Right lobe of liver (tissue), 6 donors: ENCODE measurements at regions of chr1 and their contacts with region 1.

Region 1: GRCh38 chr1:110766025-110766647 is 91.4 kb upstream of the KCNA3 start:
- DNase-seq: no peak
- ATAC-seq: peak; percentile 61 to 82 (median 72)
- H3K4me3 ChIP-seq: no peak overlapping the region
- H3K27ac ChIP-seq: no peak overlapping the region
- H3K4me1 ChIP-seq: no peaks in the 10 kb centered on the region
- H3K27me3 ChIP-seq: peaks cover 0 to 5% of the 10 kb centered on the region in 2 donors
- CTCF ChIP-seq: peak; percentile 56 to 82 (median 76)
- POLR2A ChIP-seq: no peak

Region 2: GRCh38 chr1:110630839-110631663 is 135.1 kb before region 1 on chr1:
- intact Hi-C with region 1: loop called (anchors 5 to 10 kb)
- DNase-seq: peak; percentile 74 to 78 (median 77)
- ATAC-seq: peak; percentile 94 to 97 (median 95)
- H3K4me3 ChIP-seq: no peak overlapping the region
- H3K27ac ChIP-seq: no peak overlapping the region
- H3K4me1 ChIP-seq: no peaks in the 10 kb centered on the region
- H3K27me3 ChIP-seq: no peaks in the 10 kb centered on the region
- CTCF ChIP-seq: peak; percentile 72 to 90 (median 81)
- POLR2A ChIP-seq: no peak